HEK293T (cell line): ENCODE measurements at regions of chr12 and their contacts with region 1.

Region 1: DNA sequence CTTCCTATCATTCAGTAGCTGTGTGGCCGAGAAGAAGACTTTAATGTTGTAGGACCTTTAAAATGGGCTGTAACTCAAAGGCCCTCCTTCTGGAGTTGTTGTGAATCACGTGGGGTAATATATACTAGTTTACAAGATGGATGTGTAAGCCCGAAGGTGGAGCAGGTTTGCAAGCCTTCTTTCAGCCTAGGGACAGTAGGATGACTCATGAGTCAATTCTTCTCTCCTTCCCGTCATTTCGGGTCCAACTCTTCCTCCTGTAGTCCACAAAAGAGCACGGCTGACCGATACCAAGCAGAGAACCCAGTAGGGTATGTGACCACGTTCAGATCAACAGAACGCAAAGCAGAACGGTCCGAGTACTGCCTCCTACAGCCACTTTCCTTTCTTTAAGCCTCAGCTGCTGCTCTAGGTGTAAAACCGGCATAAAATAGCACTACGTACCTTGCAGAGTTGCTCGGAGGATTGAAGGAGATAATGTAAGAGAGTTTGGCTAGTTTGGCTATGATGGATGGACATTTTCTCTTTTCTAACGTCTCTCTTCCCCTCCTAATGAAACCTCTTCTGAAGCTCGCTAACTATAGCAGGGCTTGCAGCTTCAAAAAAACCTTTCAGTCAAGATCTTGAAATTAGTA is 1.3 kb upstream of the RASSF3 start:
- DNase-seq: peak; percentile 59

Region 2: GRCh38 chr12:64347630-64348029 is 261.4 kb before region 1 on chr12:
- CTCF ChIA-PET with region 1: no interaction called
- POLR2A ChIA-PET with region 1: no interaction called
- DNase-seq: no peak

Region 3: GRCh38 chr12:64550755-64551154 is 58.3 kb before region 1 on chr12:
- CTCF ChIA-PET with region 1: interaction called, 10 read pairs
- POLR2A ChIA-PET with region 1: interaction called, 3 read pairs
- DNase-seq: no peak